ENCODE measurements at regions of chr11 and their contacts with region 1.

Region 1: GRCh38 chr11:45102810-45103621 is 43.4 kb upstream of the PRDM11 start:
- DNase-seq: peak in 1 of 2 donors; percentile 37
- H3K4me3 ChIP-seq: peak overlapping the region in 1 of 3 donors; percentile 16
- H3K27ac ChIP-seq: no peak overlapping the region
- H3K4me1 ChIP-seq: no peaks in the 10 kb centered on the region
- H3K27me3 ChIP-seq: no peaks in the 10 kb centered on the region
- CTCF ChIP-seq: peak; percentile 96 to 98 (median 97)
- POLR2A ChIP-seq: no peak

Region 2: DNA sequence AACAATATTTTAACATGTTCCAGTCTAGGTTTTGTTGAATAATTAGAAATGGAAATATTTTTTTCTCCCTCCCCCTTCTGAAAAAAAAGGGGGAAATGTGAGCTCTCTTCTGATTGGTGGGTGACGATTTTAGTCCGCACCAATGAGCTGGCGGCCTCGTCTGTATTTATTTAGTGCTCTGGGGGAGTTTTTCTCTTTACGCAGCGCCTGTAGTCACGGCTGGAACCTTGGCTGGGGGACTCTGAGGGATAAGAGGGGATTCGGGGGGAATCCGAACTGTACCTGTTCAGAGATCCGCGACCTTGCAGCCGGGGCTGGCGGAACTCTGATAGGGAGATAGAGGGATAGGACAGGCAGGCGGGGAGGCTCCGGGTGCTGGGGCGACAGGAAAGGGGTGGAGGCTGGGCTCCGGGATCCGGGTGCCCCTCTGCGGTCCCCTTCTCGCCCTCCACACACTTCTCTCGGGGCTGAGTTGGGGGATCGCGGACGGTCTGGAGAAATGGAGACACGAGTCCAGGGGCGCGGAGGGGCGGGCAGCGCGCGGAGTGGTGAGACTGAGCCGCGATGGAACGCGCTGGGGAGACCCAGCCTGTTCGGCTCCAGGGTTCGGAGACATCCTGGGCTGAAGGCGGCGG is 1522.2 kb before region 1 on chr11:
- intact Hi-C with region 1: loop called (anchors 5 kb)
- DNase-seq: no peak
- H3K4me3 ChIP-seq: peak overlapping the region in 2 of 3 donors; percentile 26 to 59
- H3K27ac ChIP-seq: no peak overlapping the region
- H3K4me1 ChIP-seq: peaks cover 0 to 16% of the 10 kb centered on the region in 2 donors
- H3K27me3 ChIP-seq: peaks cover 3 to 90% of the 10 kb centered on the region in 2 donors
- CTCF ChIP-seq: no peak
- POLR2A ChIP-seq: no peak

Region 3: DNA sequence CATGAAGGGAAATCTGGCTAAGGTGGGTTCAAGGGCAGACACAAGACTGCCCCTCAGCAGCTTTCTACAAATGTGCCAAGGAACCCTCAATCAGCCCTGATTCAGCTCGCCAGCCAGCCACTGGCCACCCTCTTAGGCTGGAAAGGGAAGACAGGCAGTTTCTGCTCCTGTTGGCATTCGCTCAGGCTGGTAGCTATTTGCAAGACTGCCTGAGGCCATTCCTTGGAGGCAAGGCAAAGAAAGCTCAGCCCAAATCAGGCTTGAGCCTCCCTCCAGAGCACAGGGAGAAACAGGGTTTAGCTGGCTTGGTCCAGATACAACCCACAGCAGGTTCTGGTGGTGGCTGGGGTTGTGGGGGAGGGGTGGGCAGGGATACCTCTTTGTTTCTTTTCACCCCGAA is 171.6 kb before region 1 on chr11:
- intact Hi-C with region 1: loop called (anchors 5 kb)
- DNase-seq: no peak
- H3K4me3 ChIP-seq: no peak overlapping the region
- H3K27ac ChIP-seq: no peak overlapping the region
- H3K4me1 ChIP-seq: no peaks in the 10 kb centered on the region
- H3K27me3 ChIP-seq: no peaks in the 10 kb centered on the region
- CTCF ChIP-seq: no peak
- POLR2A ChIP-seq: no peak

Region 4: GRCh38 chr11:45073685-45074141 is 29.3 kb before region 1 on chr11:
- intact Hi-C with region 1: no loop called
- DNase-seq: no peak
- H3K4me3 ChIP-seq: no peak overlapping the region
- H3K27ac ChIP-seq: peak overlapping the region; percentile 56 to 74
- H3K4me1 ChIP-seq: no peaks in the 10 kb centered on the region
- H3K27me3 ChIP-seq: no peaks in the 10 kb centered on the region
- CTCF ChIP-seq: no peak
- POLR2A ChIP-seq: no peak

Region 5: GRCh38 chr11:45089676-45090499 is 13.1 kb before region 1 on chr11:
- intact Hi-C with region 1: no loop called
- DNase-seq: no peak
- H3K4me3 ChIP-seq: no peak overlapping the region
- H3K27ac ChIP-seq: peak overlapping the region; percentile 86 to 95
- H3K4me1 ChIP-seq: peaks cover 8 to 29% of the 10 kb centered on the region in 2 donors
- H3K27me3 ChIP-seq: no peaks in the 10 kb centered on the region
- CTCF ChIP-seq: no peak
- POLR2A ChIP-seq: no peak

Measured in breast epithelium (tissue), 4 donors.